AG04449 (cell line): ENCODE measurements at regions of chr3 and their contacts with region 1.

Region 1: GRCh38 chr3:115986555-115987207 is 363.4 kb downstream of the GAP43 start:
- DNase-seq: no peak
- H3K4me3 ChIP-seq: no peak overlapping the region
- CTCF ChIP-seq: no peak

Region 2: GRCh38 chr3:116001151-116001621 is 14.5 kb after region 1 on chr3:
- CTCF ChIA-PET with region 1: interaction called, 15 read pairs
- POLR2A ChIA-PET with region 1: interaction called, 3 read pairs
- DNase-seq: no peak
- H3K4me3 ChIP-seq: no peak overlapping the region
- CTCF ChIP-seq: no peak

Region 3: DNA sequence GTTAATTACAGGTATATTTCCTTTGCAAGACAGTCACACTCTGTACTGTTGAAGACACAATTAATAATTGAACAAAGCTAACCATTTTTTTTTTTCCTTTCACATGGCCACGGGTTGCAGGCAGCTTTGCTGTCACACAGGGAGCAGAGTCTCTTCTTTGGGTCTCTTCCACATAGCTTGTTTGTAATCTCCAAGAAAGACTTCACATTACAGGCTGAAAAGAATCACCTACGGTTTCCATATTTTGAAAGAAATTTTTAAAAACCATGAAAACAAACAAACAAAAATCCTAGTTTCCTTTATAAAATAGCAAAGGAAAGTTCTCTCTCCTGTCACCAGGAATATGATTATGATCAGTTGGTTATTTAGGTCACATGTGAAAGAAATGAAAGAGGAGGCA is 29.2 kb after region 1 on chr3:
- CTCF ChIA-PET with region 1: no interaction called
- POLR2A ChIA-PET with region 1: no interaction called
- DNase-seq: no peak
- H3K4me3 ChIP-seq: no peak overlapping the region
- CTCF ChIP-seq: no peak